ENCODE measurements at regions of chr10 and their contacts with region 1.

Region 1: GRCh38 chr10:119416855-119417254 is 125.7 kb downstream of the RGS10 start:
- DNase-seq: peak in 5 of 6 donors; percentile 30 to 81 (median 55)
- ATAC-seq: peak; percentile 71 to 84 (median 80)
- H3K4me3 ChIP-seq: no peak overlapping the region
- H3K27ac ChIP-seq: no peak overlapping the region
- H3K4me1 ChIP-seq: peaks cover 0 to 7% (median 0%) of the 10 kb centered on the region in 3 donors
- H3K27me3 ChIP-seq: no peaks in the 10 kb centered on the region
- CTCF ChIP-seq: peak; percentile 31 to 59 (median 49)

Region 2: GRCh38 chr10:119207367-119207668 is 209.5 kb before region 1 on chr10 and contains the start of gene GRK5:
- intact Hi-C with region 1: loop called in 2 of 3 experiments (anchors 10 kb)
- DNase-seq: peak; percentile 90 to 97 (median 92)
- ATAC-seq: peak; percentile 91 to 97 (median 94)
- H3K4me3 ChIP-seq: peak within 1 kb of the TSS; percentile 74 to 98 (median 82)
- H3K27ac ChIP-seq: peak within 1 kb of the TSS; percentile 88 to 97 (median 94)
- H3K4me1 ChIP-seq: peaks cover 0 to 25% (median 0%) of the 10 kb centered on the region in 3 donors
- H3K27me3 ChIP-seq: no peaks in the 10 kb centered on the region
- CTCF ChIP-seq: no peak
- total RNA-seq, gene GRK5: 1.4 to 4.1 (median 2.2) TPM

Measured in pancreas (tissue), 10 donors.